Sigmoid colon (tissue), 7 donors: ENCODE measurements at regions of chr3 and their contacts with region 1.

Region 1: GRCh38 chr3:11634081-11634635 is 9.6 kb downstream of the VGLL4 start:
- DNase-seq: no peak
- H3K4me3 ChIP-seq: no peak overlapping the region
- H3K27ac ChIP-seq: peak overlapping the region; percentile 59 to 97 (median 83)
- H3K4me1 ChIP-seq: peaks cover 0 to 100% (median 97%) of the 10 kb centered on the region in 4 donors
- H3K27me3 ChIP-seq: no peaks in the 10 kb centered on the region
- CTCF ChIP-seq: no peak
- EP300 ChIP-seq: no peak
- POLR2A ChIP-seq: no peak

Region 2: DNA sequence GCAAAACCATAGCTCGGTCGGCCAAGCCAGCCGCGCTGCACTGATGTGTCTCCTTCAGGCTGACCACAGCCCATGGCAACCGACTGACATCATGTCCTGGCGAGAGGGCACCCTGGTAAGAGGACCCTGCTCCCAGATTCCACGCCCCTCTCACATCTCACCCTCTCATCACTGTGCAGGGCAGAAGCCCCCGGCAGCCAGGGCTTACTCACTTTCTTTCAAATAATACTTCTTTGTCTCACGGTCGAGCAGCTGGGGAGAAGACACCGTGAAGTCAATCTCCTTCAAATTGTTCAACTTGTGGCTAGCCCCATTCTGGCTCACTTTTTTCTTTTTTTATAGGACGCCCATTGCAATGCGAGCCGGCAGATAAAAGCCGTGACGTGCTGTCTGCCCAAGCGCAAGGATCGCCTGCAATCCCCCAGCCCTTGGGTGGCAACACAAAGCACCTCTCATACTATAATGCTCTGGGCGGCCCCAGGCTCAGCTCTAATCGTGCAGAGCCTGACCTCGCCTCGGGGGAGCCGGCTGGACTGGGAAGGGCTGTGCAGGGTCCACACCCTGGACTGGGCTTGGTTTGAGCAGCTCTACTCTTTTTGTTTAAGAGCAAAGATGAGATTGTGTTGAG is 24.0 kb before region 1 on chr3:
- intact Hi-C with region 1: loop called (anchors 2 kb)
- DNase-seq: no peak
- H3K4me3 ChIP-seq: no peak overlapping the region
- H3K27ac ChIP-seq: peak overlapping the region in 3 of 4 donors; percentile 22 to 87 (median 37)
- H3K4me1 ChIP-seq: peaks cover 0 to 97% (median 90%) of the 10 kb centered on the region in 4 donors
- H3K27me3 ChIP-seq: no peaks in the 10 kb centered on the region
- CTCF ChIP-seq: no peak
- EP300 ChIP-seq: no peak
- POLR2A ChIP-seq: no peak